T-cell (primary cell): ENCODE measurements at regions of chr3 and their contacts with region 1.

Region 1: GRCh38 chr3:20039766-20040475 is at the start of gene KAT2B:
- DNase-seq: peak; percentile 68 to 90 (median 81)
- ATAC-seq: peak; percentile 76 to 80 (median 78)
- H3K4me3 ChIP-seq: peak within 1 kb of the TSS; percentile 65 to 92
- H3K4me3 Mint-ChIP-seq: peak within 1 kb of the TSS; percentile 97 to 100 (median 97)
- H3K27ac ChIP-seq: peak within 1 kb of the TSS; percentile 92
- H3K27ac Mint-ChIP-seq: peak within 1 kb of the TSS; percentile 95 to 99
- H3K4me1 ChIP-seq: peaks cover 16 to 45% of the 10 kb centered on the region in 2 experiments
- H3K4me1 Mint-ChIP-seq: peaks cover 48 to 54% (median 54%) of the 10 kb centered on the region in 3 donors
- H3K27me3 ChIP-seq: no peaks in the 10 kb centered on the region
- H3K27me3 Mint-ChIP-seq: no peaks in the 10 kb centered on the region
- total RNA-seq, gene KAT2B: 49.5 to 98.8 (median 80.8) TPM

Region 2: DNA sequence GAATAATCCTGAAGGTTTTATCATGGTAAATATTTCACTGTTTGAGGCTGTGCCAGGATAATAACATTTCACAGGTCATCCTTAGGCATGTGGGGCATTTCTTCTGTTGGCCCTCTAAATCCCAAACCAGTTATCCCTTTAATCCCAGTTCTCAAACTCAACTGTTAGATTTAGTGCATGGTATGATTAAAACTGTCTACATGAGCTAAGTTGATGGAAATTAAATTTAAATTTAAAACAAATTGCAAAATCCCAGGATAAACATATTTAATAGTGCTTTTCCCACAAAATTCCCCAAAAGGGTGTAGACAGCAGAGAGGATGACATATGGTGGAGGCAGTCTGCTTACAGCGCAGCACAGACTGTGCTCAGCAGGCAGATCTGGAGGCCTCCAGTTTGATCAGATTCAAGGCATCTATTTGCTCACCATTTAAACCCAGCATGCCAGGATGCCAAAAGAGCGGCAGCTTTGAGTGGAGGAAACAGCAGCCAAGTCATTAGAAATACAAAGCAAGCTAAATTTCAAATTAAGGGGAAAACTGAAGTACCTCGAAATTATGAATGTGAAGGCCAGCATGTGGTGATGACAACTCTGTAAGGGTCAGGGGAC is 565.8 kb before region 1 on chr3:
- CTCF ChIA-PET with region 1: no interaction called
- POLR2A ChIA-PET with region 1: no interaction called
- DNase-seq: no peak
- ATAC-seq: no peak
- H3K4me3 ChIP-seq: no peak overlapping the region
- H3K4me3 Mint-ChIP-seq: no peak overlapping the region
- H3K27ac ChIP-seq: no peak overlapping the region
- H3K27ac Mint-ChIP-seq: no peak overlapping the region
- H3K4me1 ChIP-seq: no peaks in the 10 kb centered on the region
- H3K4me1 Mint-ChIP-seq: no peaks in the 10 kb centered on the region
- H3K27me3 ChIP-seq: no peaks in the 10 kb centered on the region
- H3K27me3 Mint-ChIP-seq: no peaks in the 10 kb centered on the region

Region 3: GRCh38 chr3:19946832-19947548 is 92.9 kb before region 1 on chr3 and contains the start of gene RAB5A:
- CTCF ChIA-PET with region 1: interaction called in 1 of 2 experiments, 3 read pairs
- POLR2A ChIA-PET with region 1: interaction called, 4 to 10 read pairs
- DNase-seq: peak; percentile 91 to 98 (median 95)
- ATAC-seq: peak; percentile 86 to 90 (median 88)
- H3K4me3 ChIP-seq: peak within 1 kb of the TSS; percentile 78 to 98
- H3K4me3 Mint-ChIP-seq: peak within 1 kb of the TSS; percentile 95 to 100 (median 99)
- H3K27ac ChIP-seq: peak within 1 kb of the TSS; percentile 96
- H3K27ac Mint-ChIP-seq: peak within 1 kb of the TSS; percentile 97 to 99
- H3K4me1 ChIP-seq: peaks cover 13 to 23% of the 10 kb centered on the region in 2 experiments
- H3K4me1 Mint-ChIP-seq: peaks cover 48 to 56% (median 51%) of the 10 kb centered on the region in 3 donors
- H3K27me3 ChIP-seq: no peaks in the 10 kb centered on the region
- H3K27me3 Mint-ChIP-seq: no peaks in the 10 kb centered on the region
- total RNA-seq, gene RAB5A: 41.3 to 91.0 (median 54.7) TPM